ENCODE measurements at regions of chr17 and their contacts with region 1.

Region 1: GRCh38 chr17:40909351-40909750 is 24.3 kb upstream of the KRT20 start:
- DNase-seq: peak; percentile 92

Region 2: GRCh38 chr17:40854159-40854814 is 55.1 kb before region 1 on chr17:
- intact Hi-C with region 1: no loop called
- DNase-seq: no peak

Region 3: DNA sequence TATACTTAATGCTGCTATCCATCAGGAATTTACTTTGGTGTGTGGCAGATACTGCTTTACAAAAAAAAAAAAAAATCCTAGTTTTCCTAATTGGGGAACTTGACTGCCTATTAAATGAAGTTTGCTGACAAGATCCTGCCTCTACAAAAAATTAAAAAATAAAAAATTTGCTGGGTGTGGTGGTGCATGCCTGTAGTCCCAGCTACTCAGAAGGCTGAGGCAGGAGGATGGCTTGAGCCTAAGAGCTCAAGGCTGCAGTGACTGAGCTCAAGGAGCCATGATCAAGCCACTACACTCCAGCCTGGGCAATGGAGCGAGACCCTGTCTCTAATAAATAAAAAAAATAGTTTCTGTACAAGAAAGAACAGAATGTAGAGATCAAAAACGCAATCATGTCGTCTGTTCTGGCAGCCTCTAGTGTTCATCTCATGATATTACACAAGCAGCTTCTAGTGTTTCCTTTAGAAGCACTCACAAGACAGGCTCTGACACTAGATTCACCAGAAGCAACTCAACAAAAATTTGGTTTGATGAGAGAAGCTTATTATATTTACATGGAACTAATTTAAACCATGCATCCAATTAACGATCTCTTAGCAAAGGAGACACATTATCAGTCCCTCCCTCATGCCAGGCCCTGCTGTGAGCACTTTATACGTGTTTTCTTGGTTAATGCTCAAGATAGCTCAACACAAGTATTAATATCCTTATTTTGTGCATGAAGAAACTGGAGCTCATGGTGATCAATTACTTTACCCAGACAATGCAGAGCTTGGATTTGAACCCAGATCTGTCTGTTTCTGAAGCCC is 412.9 kb after region 1 on chr17:
- intact Hi-C with region 1: loop called (anchors 10 kb)
- DNase-seq: no peak

Region 4: GRCh38 chr17:41548844-41549595 is 639.7 kb after region 1 on chr17:
- intact Hi-C with region 1: loop called (anchors 5 kb)
- DNase-seq: peak; percentile 96

Region 5: DNA sequence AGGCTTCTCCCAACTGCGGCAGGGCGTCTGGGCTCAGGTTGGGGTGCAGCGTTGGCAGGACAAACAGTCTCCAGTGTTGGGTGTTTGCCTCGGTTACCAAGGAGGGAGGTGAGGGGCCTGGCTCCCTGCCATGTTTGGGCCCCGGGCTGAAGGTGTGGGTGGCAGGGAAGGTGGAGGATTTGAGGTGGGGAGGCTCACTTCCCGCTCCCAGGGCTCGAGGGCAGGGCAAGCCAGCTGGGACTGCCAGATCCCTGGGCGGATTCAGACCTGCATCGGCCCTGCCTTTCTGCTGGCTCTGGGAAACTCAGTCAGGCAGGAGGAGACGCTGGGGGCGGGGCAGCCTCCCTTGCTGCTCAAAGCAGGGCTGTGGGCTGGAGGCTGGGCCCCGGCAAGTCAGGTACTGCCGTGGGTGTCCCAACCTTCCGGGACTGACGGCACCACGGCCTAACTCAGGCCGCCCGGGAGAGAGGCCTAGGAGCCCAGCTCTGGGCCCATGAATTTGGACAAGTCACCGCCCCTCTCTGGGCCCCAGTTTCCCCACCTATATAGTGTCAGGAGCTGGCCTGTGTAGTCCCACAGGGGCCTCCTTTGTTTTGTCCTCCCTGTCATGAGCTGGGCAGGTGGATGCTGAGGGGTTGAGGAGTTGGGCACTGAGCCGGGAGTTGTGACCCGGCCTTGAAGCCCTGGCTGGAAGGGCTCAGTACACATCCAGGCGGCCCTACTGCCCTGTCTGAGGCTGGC is 746.4 kb after region 1 on chr17:
- intact Hi-C with region 1: loop called (anchors 10 kb)
- DNase-seq: no peak

Region 6: DNA sequence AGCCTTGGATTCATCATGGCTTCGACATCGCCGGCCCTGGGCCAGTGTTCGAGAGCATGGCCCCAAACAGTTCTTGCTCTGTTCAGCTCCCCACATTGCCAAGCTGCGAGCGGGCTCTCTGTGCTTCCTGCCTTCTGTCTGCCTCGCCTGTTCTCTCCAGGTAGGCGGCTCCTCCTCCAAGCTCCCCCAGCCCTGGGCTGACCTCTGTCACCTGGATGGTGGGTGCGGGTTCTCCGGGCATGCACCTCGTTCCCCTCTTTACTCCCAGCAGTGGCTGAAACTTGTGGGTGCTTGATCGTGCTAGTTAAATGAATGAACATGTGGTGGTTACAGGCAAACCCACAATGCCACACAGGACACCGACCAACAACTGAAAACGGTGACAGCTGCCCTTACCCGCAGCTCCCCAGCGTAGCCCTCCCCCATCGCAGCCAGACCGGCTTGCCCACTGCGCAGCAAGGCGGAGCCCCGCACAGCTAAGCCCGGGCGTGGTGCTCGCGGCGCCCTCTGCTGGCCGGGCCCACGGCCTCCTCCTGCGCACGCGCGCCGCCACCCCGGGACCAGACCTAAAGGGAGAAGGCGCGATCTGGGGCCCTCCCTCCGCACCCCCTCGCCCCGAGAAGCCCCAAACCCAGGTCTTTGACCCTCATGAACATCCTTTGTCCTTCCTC is 756.4 kb after region 1 on chr17:
- intact Hi-C with region 1: loop called in 1 of 2 experiments (anchors 10 kb)
- DNase-seq: peak; percentile 96